SK-N-SH (cell line): ENCODE measurements at regions of chr3 and their contacts with region 1.

Region 1: GRCh38 chr3:128408693-128409623 is 57.7 kb downstream of the DNAJB8 start:
- DNase-seq: peak; percentile 84
- H3K4me3 ChIP-seq: peak overlapping the region in 1 of 2 experiments; percentile 34; a peak in 1 of 4 replicates
- H3K27ac ChIP-seq: peak overlapping the region in 1 of 2 experiments; percentile 100; a peak in 2 of 4 replicates
- H3K4me1 ChIP-seq: peaks cover 0 to 93% of the 10 kb centered on the region in 2 experiments; a peak in 2 of 4 replicates
- H3K27me3 ChIP-seq: no peaks in the 10 kb centered on the region
- CTCF ChIP-seq: peak; percentile 32; the same call in 1 of the 2 replicates
- EP300 ChIP-seq: peak in 1 of 2 experiments; percentile 100; a peak in 2 of 4 replicates
- RAD21 ChIP-seq: peak; percentile 38

Region 2: DNA sequence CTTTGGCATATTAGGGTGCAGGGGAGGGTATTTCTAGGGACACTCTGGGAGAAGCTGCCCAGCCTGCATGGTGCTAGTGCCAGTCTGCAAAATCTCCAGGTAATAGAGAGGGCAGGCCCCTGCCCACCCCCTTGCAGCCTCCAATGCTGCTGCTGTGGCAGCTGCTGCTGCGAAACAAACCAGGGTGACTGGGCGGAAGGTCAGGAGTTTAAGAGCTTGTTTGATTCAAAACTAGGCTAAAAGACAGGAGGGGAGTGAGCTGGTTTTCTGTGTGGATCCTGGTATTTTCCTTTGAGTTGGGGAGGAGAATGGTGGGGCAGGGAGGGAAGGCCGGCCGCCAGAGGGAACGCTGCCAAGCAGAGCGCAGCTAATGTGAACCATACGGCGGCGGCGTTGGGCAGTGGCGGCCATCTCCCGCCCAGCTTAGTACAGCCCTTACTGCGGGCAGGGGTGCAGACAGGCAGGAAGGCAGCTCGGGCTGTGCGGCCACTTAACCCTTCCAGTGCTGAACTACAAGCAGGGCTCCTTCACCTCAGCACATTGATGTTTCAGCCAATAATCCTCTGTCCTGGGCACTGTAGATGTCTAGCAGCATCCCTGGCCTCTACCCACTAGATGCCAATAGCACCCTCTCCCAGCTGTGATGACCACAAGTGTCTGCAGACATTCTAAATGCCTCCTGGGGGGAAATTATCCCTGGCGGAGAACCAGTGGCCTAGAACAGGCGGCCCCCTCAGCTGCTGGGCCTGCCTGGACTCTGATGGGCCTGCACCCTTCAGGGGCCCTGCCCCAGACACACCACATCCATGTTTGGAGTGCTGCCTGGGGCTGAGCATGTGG is 130.0 kb before region 1 on chr3:
- CTCF ChIA-PET with region 1: interaction called, 10 read pairs
- POLR2A ChIA-PET with region 1: interaction called, 38 read pairs
- DNase-seq: peak; percentile 88
- H3K4me3 ChIP-seq: no peak overlapping the region; a peak in 1 of 4 replicates
- H3K27ac ChIP-seq: peak overlapping the region; percentile 62 to 100
- H3K4me1 ChIP-seq: peaks cover 45 to 98% of the 10 kb centered on the region in 2 experiments
- H3K27me3 ChIP-seq: no peaks in the 10 kb centered on the region
- CTCF ChIP-seq: no peak
- EP300 ChIP-seq: peak; percentile 74 to 90
- RAD21 ChIP-seq: no peak; the same call in 1 of the 2 replicates

Region 3: GRCh38 chr3:128322066-128323022 is 86.6 kb before region 1 on chr3:
- CTCF ChIA-PET with region 1: interaction called, 11 read pairs
- POLR2A ChIA-PET with region 1: interaction called, 8 read pairs
- DNase-seq: no peak
- H3K4me3 ChIP-seq: no peak overlapping the region
- H3K27ac ChIP-seq: peak overlapping the region in 1 of 2 experiments; percentile 98; a peak in 1 of 4 replicates
- H3K4me1 ChIP-seq: peaks cover 0 to 90% of the 10 kb centered on the region in 2 experiments; a peak in 2 of 4 replicates
- H3K27me3 ChIP-seq: no peaks in the 10 kb centered on the region
- CTCF ChIP-seq: peak; percentile 53
- EP300 ChIP-seq: no peak
- RAD21 ChIP-seq: peak; percentile 62

Region 4: GRCh38 chr3:128456776-128457715 is 48.1 kb after region 1 on chr3:
- CTCF ChIA-PET with region 1: interaction called, 7 read pairs
- POLR2A ChIA-PET with region 1: interaction called, 50 read pairs
- DNase-seq: peak; percentile 96
- H3K4me3 ChIP-seq: peak overlapping the region in 1 of 2 experiments; percentile 50; a peak in 2 of 4 replicates
- H3K27ac ChIP-seq: peak overlapping the region in 1 of 2 experiments; percentile 100; a peak in 2 of 4 replicates
- H3K4me1 ChIP-seq: peaks cover 0 to 75% of the 10 kb centered on the region in 2 experiments; a peak in 1 of 4 replicates
- H3K27me3 ChIP-seq: peaks cover 5% of the 10 kb centered on the region; the same call in 1 of the 2 replicates
- CTCF ChIP-seq: no peak
- EP300 ChIP-seq: peak in 1 of 2 experiments; percentile 98; a peak in 2 of 4 replicates
- RAD21 ChIP-seq: peak; percentile 25

Region 5: DNA sequence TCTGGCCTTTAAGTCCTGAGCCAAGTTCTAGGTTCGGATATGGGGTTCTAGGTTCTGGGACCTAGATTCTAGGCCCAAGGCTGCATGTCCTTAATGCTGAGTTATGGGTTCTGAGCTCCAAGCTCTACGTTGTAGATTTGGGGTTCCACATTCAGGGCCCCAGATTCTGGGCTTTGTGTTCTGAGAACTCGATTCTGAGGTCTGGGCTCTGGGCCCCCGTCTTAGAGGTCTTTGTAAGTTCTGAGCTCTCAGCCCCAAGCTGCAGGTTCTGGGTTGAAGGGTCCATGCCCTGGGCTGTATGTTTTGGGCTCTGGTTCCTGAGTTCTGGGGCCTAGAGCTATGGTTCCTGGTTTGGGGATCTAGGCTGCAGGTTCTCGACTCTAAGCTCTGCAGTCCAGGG is 67.7 kb after region 1 on chr3:
- CTCF ChIA-PET with region 1: interaction called, 40 read pairs
- POLR2A ChIA-PET with region 1: interaction called, 100 read pairs
- DNase-seq: no peak
- H3K4me3 ChIP-seq: no peak overlapping the region
- H3K27ac ChIP-seq: peak overlapping the region in 1 of 2 experiments; percentile 39; a peak in 2 of 4 replicates
- H3K4me1 ChIP-seq: peaks cover 0 to 55% of the 10 kb centered on the region in 2 experiments; a peak in 1 of 4 replicates
- H3K27me3 ChIP-seq: peaks cover 7% of the 10 kb centered on the region
- CTCF ChIP-seq: no peak
- EP300 ChIP-seq: no peak
- RAD21 ChIP-seq: no peak

Region 6: GRCh38 chr3:128497387-128498126 is 88.6 kb after region 1 on chr3:
- CTCF ChIA-PET with region 1: interaction called, 30 read pairs
- POLR2A ChIA-PET with region 1: interaction called, 66 read pairs
- DNase-seq: peak; percentile 95
- H3K4me3 ChIP-seq: peak overlapping the region; percentile 44 to 58
- H3K27ac ChIP-seq: peak overlapping the region in 1 of 2 experiments; percentile 97; a peak in 2 of 4 replicates
- H3K4me1 ChIP-seq: peaks cover 0 to 47% of the 10 kb centered on the region in 2 experiments; a peak in 1 of 4 replicates
- H3K27me3 ChIP-seq: peaks cover 3% of the 10 kb centered on the region; the same call in 1 of the 2 replicates
- CTCF ChIP-seq: peak; percentile 74
- EP300 ChIP-seq: peak in 1 of 2 experiments; percentile 8; a peak in 1 of 4 replicates
- RAD21 ChIP-seq: peak; percentile 64